BJ (cell line): ENCODE measurements at regions of chr6 and their contacts with region 1.

Region 1: DNA sequence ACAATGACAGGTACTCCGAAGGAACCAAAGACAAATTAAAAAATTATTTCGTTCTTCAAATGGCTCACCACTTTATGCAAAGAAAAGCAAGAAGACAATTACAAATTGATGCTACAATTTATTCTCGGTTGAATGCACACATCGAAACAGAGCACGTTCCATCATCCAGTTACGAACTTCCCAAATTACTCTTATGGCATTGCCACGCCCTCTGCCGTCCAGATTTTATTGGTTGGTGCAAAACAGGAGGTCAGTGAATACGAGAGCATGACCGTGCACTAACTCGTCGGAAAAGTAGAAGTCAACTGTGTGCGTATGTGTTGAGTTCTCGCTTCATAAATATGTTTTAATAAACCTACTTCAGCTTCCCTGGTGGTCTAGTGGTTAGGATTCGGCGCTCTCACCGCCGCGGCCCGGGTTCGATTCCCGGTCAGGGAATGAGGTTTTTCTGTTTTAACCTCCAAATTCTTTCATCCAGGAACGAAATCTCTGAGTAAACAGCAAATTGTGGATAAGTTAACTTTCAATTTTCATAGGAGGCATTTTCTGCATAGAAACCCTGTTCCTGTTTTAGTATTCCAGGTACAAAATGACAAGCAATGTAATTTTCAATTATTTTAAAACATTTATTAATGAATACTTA is 23.2 kb downstream of the ZNF311 start:
- DNase-seq: peak; percentile 64
- H3K4me3 ChIP-seq: peak overlapping the region; percentile 55
- H3K27me3 ChIP-seq: no peaks in the 10 kb centered on the region
- CTCF ChIP-seq: no peak

Region 2: GRCh38 chr6:28606424-28607400 is 375.2 kb before region 1 on chr6:
- CTCF ChIA-PET with region 1: no interaction called
- POLR2A ChIA-PET with region 1: no interaction called
- DNase-seq: no peak
- H3K4me3 ChIP-seq: peak overlapping the region; percentile 26
- H3K27me3 ChIP-seq: no peaks in the 10 kb centered on the region
- CTCF ChIP-seq: peak; percentile 47

Region 3: DNA sequence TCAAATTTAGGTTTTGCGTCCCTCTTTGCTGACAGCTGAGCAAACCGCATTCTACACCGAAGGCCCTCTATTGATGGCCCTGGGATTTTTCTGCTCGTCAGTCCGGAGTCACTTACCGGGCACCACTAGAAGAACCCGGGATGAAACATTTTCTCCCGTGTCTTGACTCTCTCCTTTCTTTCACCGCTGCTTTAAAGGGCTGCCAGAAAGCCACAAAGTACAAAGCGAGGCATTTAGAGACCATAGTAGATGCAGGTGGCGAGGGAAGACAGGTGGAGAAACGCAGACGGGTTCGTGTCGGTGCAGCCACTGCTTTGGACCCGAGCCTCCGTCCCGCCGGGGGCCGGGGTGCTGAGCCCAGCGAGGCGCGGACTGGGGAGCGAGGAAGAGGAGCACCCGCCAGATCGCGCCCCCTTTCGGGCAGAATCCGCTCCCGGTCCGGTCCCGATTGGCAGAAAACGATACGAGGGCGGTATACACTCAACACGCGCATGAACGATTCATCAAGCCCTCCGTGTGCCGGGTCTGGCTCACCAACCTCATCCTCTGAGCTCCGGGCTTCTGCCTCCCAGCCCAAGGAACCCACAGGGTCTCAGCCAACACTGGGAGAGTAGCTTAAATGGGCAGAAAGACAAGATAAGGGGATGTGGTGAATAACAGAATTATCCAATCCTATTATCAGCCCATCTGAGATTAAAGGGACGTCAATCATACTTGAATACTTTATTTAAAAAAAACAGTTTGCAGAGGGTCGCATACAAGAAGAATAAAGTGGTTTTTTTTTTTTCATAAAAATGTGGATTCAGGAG is 143.1 kb before region 1 on chr6:
- CTCF ChIA-PET with region 1: interaction called, 13 read pairs
- POLR2A ChIA-PET with region 1: interaction called, 13 read pairs
- DNase-seq: peak; percentile 19
- H3K4me3 ChIP-seq: peak overlapping the region; percentile 63
- H3K27me3 ChIP-seq: 0 out of 2 replicates have a peak, but pooled peaks cover 1% of the 10 kb centered on the region
- CTCF ChIP-seq: peak; percentile 86

Region 4: DNA sequence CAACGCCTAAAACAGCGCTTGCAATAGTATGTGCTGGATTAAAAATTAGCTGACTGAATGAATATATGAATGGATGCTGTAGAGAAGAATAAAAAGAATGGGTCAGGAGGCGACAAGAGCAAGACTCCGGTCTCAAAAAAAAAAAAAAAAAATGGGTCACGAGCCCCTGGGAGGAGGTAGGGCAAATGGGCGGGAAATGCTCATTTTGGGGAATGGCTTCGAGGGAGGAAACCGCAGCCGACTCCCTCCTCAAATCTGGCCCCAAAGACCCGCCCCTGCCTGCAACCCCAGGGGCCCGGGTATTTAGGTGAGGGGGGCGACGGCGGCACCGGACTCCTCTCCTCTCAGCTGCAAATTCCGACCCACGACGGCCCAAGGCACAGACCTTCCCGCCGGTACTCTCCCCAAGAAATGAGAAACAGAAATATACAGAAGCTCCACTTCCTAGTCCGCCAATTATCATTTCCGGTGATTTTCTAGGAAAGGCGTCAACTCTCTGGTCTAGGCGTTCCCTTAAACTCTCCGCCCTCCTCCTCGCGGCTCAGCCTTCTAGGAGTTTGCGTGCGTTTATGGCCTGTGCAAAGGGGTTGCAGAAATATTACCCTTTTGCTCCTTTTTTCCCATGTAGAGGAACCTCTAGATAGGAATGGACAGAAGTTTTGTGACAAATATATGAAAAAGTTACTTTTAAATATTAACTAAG is 23.4 kb after region 1 on chr6 and contains the start of gene ZNF311:
- CTCF ChIA-PET with region 1: interaction called, 3 read pairs
- POLR2A ChIA-PET with region 1: interaction called, 16 read pairs
- DNase-seq: no peak
- H3K4me3 ChIP-seq: peak within 1 kb of the TSS; percentile 61
- H3K27me3 ChIP-seq: no peaks in the 10 kb centered on the region
- CTCF ChIP-seq: no peak
- polyA plus RNA-seq, gene ZNF311: 0.74 and 1.0 TPM in 2 replicates

Region 5: GRCh38 chr6:29016559-29017427 is 34.8 kb after region 1 on chr6:
- CTCF ChIA-PET with region 1: interaction called, 12 read pairs
- POLR2A ChIA-PET with region 1: no interaction called
- DNase-seq: no peak
- H3K4me3 ChIP-seq: peak overlapping the region; percentile 39
- H3K27me3 ChIP-seq: peaks cover 2% of the 10 kb centered on the region
- CTCF ChIP-seq: peak; percentile 80